CD8-positive, alpha-beta T cell (primary cell): ENCODE measurements at regions of chr2 and their contacts with region 1.

Region 1: DNA sequence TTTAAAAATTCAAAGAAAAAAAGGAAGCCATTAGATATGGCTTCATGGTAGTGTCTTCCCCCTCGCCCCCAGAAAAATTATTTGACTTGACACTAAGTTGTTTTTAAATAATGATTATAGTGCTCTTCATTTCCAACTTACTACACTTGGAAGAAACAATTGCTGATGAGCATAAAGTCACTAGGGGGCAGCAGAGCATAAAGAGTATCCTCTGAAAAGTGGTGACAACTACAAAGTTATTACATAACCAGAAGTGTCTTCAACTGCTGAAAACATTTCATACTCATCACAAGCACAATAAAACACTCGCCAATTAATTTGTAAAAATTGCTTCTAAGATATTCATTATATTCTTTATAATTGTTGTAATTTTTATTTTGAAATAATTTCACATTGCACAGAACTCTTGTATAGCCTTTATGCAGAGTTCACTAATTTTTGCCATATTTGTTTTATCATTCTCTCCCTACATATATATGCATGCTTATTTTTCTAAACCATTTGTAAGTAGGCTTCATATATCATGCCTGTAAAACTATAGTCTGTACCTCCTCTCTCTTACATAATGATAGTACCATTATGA is 54.9 kb downstream of the EXOC6B start:
- DNase-seq: peak; percentile 10 to 80 (median 57)
- ATAC-seq: peak; percentile 49
- H3K4me3 ChIP-seq: no peak overlapping the region
- H3K4me3 Mint-ChIP-seq: no peak overlapping the region
- H3K27ac ChIP-seq: no peak overlapping the region
- H3K27ac Mint-ChIP-seq: no peak overlapping the region
- H3K4me1 ChIP-seq: no peaks in the 10 kb centered on the region
- H3K4me1 Mint-ChIP-seq: no peaks in the 10 kb centered on the region
- H3K27me3 ChIP-seq: no peaks in the 10 kb centered on the region
- H3K27me3 Mint-ChIP-seq: no peaks in the 10 kb centered on the region
- CTCF ChIP-seq: peak; percentile 94

Region 2: GRCh38 chr2:71631411-71631931 is 1139.5 kb before region 1 on chr2:
- CTCF ChIA-PET with region 1: no interaction called
- POLR2A ChIA-PET with region 1: no interaction called
- intact Hi-C with region 1: no loop called
- DNase-seq: no peak
- ATAC-seq: no peak
- H3K4me3 ChIP-seq: no peak overlapping the region
- H3K4me3 Mint-ChIP-seq: no peak overlapping the region
- H3K27ac ChIP-seq: no peak overlapping the region
- H3K27ac Mint-ChIP-seq: no peak overlapping the region
- H3K4me1 ChIP-seq: no peaks in the 10 kb centered on the region
- H3K4me1 Mint-ChIP-seq: no peaks in the 10 kb centered on the region
- H3K27me3 ChIP-seq: no peaks in the 10 kb centered on the region
- H3K27me3 Mint-ChIP-seq: peaks cover 24% of the 10 kb centered on the region
- CTCF ChIP-seq: no peak

Region 3: GRCh38 chr2:72793798-72794440 is 22.9 kb after region 1 on chr2:
- CTCF ChIA-PET with region 1: no interaction called
- POLR2A ChIA-PET with region 1: no interaction called
- intact Hi-C with region 1: no loop called
- DNase-seq: no peak
- ATAC-seq: no peak
- H3K4me3 ChIP-seq: no peak overlapping the region
- H3K4me3 Mint-ChIP-seq: no peak overlapping the region
- H3K27ac ChIP-seq: no peak overlapping the region
- H3K27ac Mint-ChIP-seq: no peak overlapping the region
- H3K4me1 ChIP-seq: no peaks in the 10 kb centered on the region
- H3K4me1 Mint-ChIP-seq: peaks cover 11% of the 10 kb centered on the region
- H3K27me3 ChIP-seq: no peaks in the 10 kb centered on the region
- H3K27me3 Mint-ChIP-seq: no peaks in the 10 kb centered on the region
- CTCF ChIP-seq: no peak

Region 4: DNA sequence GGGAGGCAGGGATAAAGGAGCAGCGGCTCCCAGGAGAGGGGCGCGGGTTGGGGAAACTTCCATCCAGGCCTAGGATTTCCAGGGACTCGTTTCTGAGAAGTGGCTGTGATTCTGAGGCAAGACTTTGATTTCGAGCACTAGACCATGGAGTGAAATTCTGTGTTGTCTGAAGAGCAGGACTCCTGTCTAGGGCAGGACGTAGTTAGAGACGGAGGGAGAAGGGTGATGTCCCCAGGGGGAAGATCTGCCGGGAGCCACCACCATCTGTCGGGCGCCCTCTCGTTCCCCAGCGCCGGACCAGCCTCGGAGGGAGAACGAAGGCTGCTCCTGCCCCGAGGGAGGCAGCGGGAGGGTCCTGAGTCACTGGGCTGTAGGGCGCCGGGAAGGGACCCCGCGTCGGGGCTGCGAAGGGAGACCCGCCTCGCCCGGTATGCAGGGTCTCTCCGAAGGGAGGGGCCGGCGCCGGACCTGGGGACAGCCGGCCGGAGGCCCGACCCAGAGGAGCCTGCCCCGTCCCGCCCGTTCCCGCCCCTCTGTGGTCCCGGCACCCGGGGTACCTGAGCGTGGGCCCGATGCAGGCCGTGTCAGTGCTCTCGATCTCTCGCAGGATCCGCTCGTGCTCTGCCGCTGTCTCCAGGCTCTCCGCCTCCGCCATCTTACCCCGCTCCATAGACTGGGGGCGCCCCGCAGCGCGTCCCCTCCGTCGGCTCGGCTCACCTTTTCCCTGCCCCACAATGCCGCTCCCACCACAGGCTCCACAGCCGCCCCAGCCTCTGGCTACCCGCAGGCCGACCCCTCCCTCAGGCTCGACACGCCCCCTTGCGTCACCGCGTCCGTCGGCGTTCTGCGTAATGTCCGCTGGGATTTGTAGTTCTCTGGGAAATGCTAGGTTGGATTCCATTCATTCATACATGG is 54.5 kb after region 1 on chr2 and contains the start of gene EXOC6B:
- CTCF ChIA-PET with region 1: interaction called, 3 read pairs
- POLR2A ChIA-PET with region 1: no interaction called
- intact Hi-C with region 1: loop called in 1 of 2 experiments (anchors 1 kb)
- DNase-seq: peak; percentile 67 to 91 (median 89)
- ATAC-seq: peak; percentile 89
- H3K4me3 ChIP-seq: peak within 1 kb of the TSS; percentile 70 to 88
- H3K4me3 Mint-ChIP-seq: peak within 1 kb of the TSS; percentile 98
- H3K27ac ChIP-seq: peak within 1 kb of the TSS; percentile 31 to 65
- H3K27ac Mint-ChIP-seq: peak within 1 kb of the TSS; percentile 96
- H3K4me1 ChIP-seq: peaks cover 20% of the 10 kb centered on the region
- H3K4me1 Mint-ChIP-seq: peaks cover 44% of the 10 kb centered on the region
- H3K27me3 ChIP-seq: no peaks in the 10 kb centered on the region
- H3K27me3 Mint-ChIP-seq: peaks cover 11% of the 10 kb centered on the region
- CTCF ChIP-seq: no peak
- total RNA-seq, gene EXOC6B: 13.1 to 14.9 TPM

Region 5: DNA sequence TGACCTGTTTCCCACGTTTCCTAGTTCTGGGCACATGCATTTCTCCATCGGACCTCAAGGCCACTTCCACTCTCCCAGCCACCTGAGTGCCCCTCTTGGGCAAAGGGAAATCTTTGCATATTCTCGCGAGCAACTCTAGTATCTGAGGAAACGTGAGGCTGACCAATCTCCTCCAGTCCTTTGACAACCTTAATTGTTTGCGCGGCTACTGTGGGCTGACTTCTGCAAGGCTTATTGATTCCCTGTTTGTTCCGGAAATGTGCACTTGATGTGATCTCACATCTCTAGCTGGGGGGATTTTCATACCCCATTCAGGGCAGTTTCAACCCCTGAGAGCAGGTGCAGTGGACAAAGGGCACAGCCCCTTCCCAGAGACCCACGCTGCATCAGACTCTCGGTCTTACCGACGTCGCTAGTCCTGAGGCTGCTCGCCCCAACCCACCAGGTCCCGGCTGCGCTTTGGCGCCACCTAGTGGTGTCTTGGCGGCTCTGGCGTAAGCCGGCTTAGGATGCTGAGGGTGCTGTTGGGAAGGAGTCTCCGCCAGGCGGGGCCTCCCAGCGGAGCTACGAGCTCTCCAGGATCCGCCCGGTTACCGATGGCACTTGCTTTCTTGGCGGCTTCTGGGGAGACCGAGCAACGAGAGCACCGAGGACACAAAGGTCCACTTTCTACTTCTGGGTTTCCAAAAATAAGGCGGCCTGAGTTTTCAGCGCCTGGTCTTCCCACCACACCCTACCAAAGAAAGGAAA is 91.4 kb after region 1 on chr2:
- CTCF ChIA-PET with region 1: interaction called, 40 read pairs
- POLR2A ChIA-PET with region 1: no interaction called
- intact Hi-C with region 1: loop called (anchors 1 kb)
- DNase-seq: peak; percentile 69 to 91 (median 84)
- ATAC-seq: peak; percentile 94
- H3K4me3 ChIP-seq: peak overlapping the region; percentile 0 to 16
- H3K4me3 Mint-ChIP-seq: peak overlapping the region; percentile 48
- H3K27ac ChIP-seq: no peak overlapping the region
- H3K27ac Mint-ChIP-seq: no peak overlapping the region
- H3K4me1 ChIP-seq: peaks cover 5% of the 10 kb centered on the region
- H3K4me1 Mint-ChIP-seq: peaks cover 11% of the 10 kb centered on the region
- H3K27me3 ChIP-seq: peaks cover 8 to 13% of the 10 kb centered on the region in 2 experiments
- H3K27me3 Mint-ChIP-seq: peaks cover 54% of the 10 kb centered on the region
- CTCF ChIP-seq: peak; percentile 73

Region 6: GRCh38 chr2:72973566-72974435 is 202.8 kb after region 1 on chr2:
- CTCF ChIA-PET with region 1: no interaction called
- POLR2A ChIA-PET with region 1: no interaction called
- intact Hi-C with region 1: loop called in 1 of 2 experiments (anchors 2 kb)
- DNase-seq: peak in 6 of 9 experiments; percentile 12 to 59 (median 33)
- ATAC-seq: peak; percentile 72
- H3K4me3 ChIP-seq: no peak overlapping the region
- H3K4me3 Mint-ChIP-seq: no peak overlapping the region
- H3K27ac ChIP-seq: no peak overlapping the region
- H3K27ac Mint-ChIP-seq: no peak overlapping the region
- H3K4me1 ChIP-seq: no peaks in the 10 kb centered on the region
- H3K4me1 Mint-ChIP-seq: no peaks in the 10 kb centered on the region
- H3K27me3 ChIP-seq: no peaks in the 10 kb centered on the region
- H3K27me3 Mint-ChIP-seq: no peaks in the 10 kb centered on the region
- CTCF ChIP-seq: peak; percentile 59

Region 7: GRCh38 chr2:72999729-73000725 is 229.1 kb after region 1 on chr2:
- CTCF ChIA-PET with region 1: no interaction called
- POLR2A ChIA-PET with region 1: no interaction called
- intact Hi-C with region 1: no loop called
- DNase-seq: peak in 1 of 9 experiments; percentile 27
- ATAC-seq: no peak
- H3K4me3 ChIP-seq: no peak overlapping the region
- H3K4me3 Mint-ChIP-seq: no peak overlapping the region
- H3K27ac ChIP-seq: no peak overlapping the region
- H3K27ac Mint-ChIP-seq: no peak overlapping the region
- H3K4me1 ChIP-seq: no peaks in the 10 kb centered on the region
- H3K4me1 Mint-ChIP-seq: no peaks in the 10 kb centered on the region
- H3K27me3 ChIP-seq: no peaks in the 10 kb centered on the region
- H3K27me3 Mint-ChIP-seq: no peaks in the 10 kb centered on the region
- CTCF ChIP-seq: no peak

Region 8: GRCh38 chr2:73163483-73164367 is 392.8 kb after region 1 on chr2:
- CTCF ChIA-PET with region 1: no interaction called
- POLR2A ChIA-PET with region 1: no interaction called
- intact Hi-C with region 1: loop called (anchors 2 to 5 kb)
- DNase-seq: peak; percentile 31 to 77 (median 66)
- ATAC-seq: peak; percentile 86
- H3K4me3 ChIP-seq: no peak overlapping the region
- H3K4me3 Mint-ChIP-seq: no peak overlapping the region
- H3K27ac ChIP-seq: no peak overlapping the region
- H3K27ac Mint-ChIP-seq: no peak overlapping the region
- H3K4me1 ChIP-seq: no peaks in the 10 kb centered on the region
- H3K4me1 Mint-ChIP-seq: no peaks in the 10 kb centered on the region
- H3K27me3 ChIP-seq: no peaks in the 10 kb centered on the region
- H3K27me3 Mint-ChIP-seq: peaks cover 20% of the 10 kb centered on the region
- CTCF ChIP-seq: peak; percentile 78